ENCODE measurements at regions of chr1 and their contacts with region 1.

Region 1: GRCh38 chr1:161225534-161226319 is at the start of gene TOMM40L:
- DNase-seq: peak; percentile 77 to 97
- ATAC-seq: peak; percentile 90 to 95 (median 94)
- H3K4me3 ChIP-seq: peak within 1 kb of the TSS; percentile 67
- H3K4me3 Mint-ChIP-seq: peak within 1 kb of the TSS; percentile 100
- H3K27ac ChIP-seq: peak within 1 kb of the TSS; percentile 72
- H3K27ac Mint-ChIP-seq: peak within 1 kb of the TSS; percentile 92 to 95
- H3K4me1 ChIP-seq: peaks cover 32% of the 10 kb centered on the region
- H3K4me1 Mint-ChIP-seq: peaks cover 44 to 54% of the 10 kb centered on the region in 2 donors
- H3K27me3 ChIP-seq: no peaks in the 10 kb centered on the region
- H3K27me3 Mint-ChIP-seq: no peaks in the 10 kb centered on the region
- CTCF ChIP-seq: no peak
- total RNA-seq, gene TOMM40L: 16.6 to 23.6 (median 22.8) TPM

Region 2: DNA sequence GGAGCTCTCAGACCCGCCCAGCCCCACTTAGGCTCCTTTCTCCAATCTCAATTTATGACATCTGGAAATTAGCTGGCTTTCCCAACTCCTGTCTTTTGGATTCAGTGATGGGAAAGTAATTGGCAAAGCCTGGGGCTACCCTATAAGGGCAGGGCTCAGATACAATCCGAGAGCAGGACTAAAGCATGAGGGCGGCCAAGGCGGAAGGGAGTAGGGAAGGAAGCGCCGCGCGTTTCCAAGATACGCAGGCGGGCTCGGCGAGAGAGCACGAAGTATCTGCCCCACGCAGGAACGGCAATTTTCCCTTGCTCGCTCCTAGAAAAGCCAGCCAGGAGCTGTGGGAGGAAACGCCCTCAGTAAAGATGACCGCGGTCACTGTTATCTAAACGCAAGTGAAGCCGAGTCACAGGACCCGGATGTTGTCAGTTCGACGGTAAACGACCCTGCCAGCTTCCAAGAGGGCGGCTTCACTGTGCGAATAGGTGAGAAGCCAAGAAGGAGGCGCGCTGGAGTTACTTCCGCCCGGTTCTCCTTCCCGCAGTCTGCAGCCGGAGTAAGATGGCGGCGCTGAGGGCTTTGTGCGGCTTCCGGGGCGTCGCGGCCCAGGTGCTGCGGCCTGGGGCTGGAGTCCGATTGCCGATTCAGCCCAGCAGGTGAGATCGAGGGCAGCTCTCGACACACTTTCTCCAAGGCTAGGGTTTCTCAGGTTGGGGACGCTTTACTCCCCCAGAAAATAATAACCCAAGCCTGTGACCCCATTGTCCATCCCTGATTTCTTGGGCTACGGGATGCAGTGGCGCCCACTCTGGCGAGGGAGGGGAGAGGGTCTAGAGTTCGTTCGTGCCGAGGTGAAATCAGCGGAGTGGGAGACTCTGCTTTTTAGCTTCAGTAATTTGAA is 23.6 kb before region 1 on chr1 and contains the start of gene NDUFS2:
- intact Hi-C with region 1: loop called (anchors 1 kb)
- DNase-seq: peak; percentile 89 to 99
- ATAC-seq: peak; percentile 97 to 99 (median 99)
- H3K4me3 ChIP-seq: peak within 1 kb of the TSS; percentile 76
- H3K4me3 Mint-ChIP-seq: peak within 1 kb of the TSS; percentile 94
- H3K27ac ChIP-seq: peak within 1 kb of the TSS; percentile 90
- H3K27ac Mint-ChIP-seq: peak within 1 kb of the TSS; percentile 95 to 96
- H3K4me1 ChIP-seq: peaks cover 37% of the 10 kb centered on the region
- H3K4me1 Mint-ChIP-seq: peaks cover 29 to 57% of the 10 kb centered on the region in 2 donors
- H3K27me3 ChIP-seq: no peaks in the 10 kb centered on the region
- H3K27me3 Mint-ChIP-seq: no peaks in the 10 kb centered on the region
- CTCF ChIP-seq: no peak
- total RNA-seq, gene NDUFS2: 74.7 to 88.8 (median 84.7) TPM

Region 3: GRCh38 chr1:161290779-161291178 is 65.1 kb after region 1 on chr1:
- intact Hi-C with region 1: loop called (anchors 1 kb)
- DNase-seq: no peak
- ATAC-seq: no peak
- H3K4me3 ChIP-seq: no peak overlapping the region
- H3K4me3 Mint-ChIP-seq: no peak overlapping the region
- H3K27ac ChIP-seq: no peak overlapping the region
- H3K27ac Mint-ChIP-seq: no peak overlapping the region
- H3K4me1 ChIP-seq: no peaks in the 10 kb centered on the region
- H3K4me1 Mint-ChIP-seq: peaks cover 6% of the 10 kb centered on the region in 2 donors
- H3K27me3 ChIP-seq: no peaks in the 10 kb centered on the region
- H3K27me3 Mint-ChIP-seq: peaks cover 0 to 3% of the 10 kb centered on the region in 2 donors
- CTCF ChIP-seq: no peak

Region 4: DNA sequence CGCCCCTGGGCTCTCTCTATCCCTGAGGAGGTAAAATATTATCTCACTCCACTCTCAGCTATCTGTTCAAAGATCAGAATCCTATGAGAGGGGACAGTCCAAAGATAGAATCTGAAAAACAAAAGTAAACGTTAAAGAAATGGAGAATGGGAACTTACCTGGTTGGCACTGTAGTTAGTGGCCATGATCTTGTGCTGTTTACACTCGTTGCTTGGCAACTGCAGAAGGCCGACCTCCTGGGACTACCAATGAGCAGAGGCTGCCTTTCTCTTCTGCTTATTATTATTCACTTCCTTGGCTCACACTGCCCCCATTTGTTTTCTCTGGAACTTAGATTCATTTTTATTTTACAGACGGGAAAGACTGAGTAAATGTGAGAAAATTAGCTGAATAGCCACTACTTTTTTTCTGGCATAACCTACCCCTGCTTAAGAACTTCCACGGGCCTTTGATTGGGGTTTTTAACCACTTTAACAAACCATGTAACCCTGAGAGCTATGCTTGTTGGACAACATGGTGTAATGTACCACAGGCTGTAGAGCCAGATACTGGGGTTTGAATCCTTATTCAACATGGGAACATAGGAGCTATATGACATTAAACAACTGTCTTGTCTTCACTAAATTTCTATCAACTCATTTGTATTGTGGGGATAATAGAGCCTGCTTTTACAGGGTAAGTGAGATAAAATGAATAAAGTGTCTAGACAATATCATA is 142.1 kb after region 1 on chr1 and contains the start of gene CFAP126:
- intact Hi-C with region 1: loop called (anchors 5 kb)
- DNase-seq: peak in 1 of 2 donors; percentile 82
- ATAC-seq: peak; percentile 89 to 100 (median 99)
- H3K4me3 ChIP-seq: no peak within 1 kb of the TSS
- H3K4me3 Mint-ChIP-seq: no peak within 1 kb of the TSS
- H3K27ac ChIP-seq: peak within 1 kb of the TSS; percentile 32
- H3K27ac Mint-ChIP-seq: peak within 1 kb of the TSS; percentile 67 to 82
- H3K4me1 ChIP-seq: no peaks in the 10 kb centered on the region
- H3K4me1 Mint-ChIP-seq: peaks cover 8% of the 10 kb centered on the region in 2 donors
- H3K27me3 ChIP-seq: no peaks in the 10 kb centered on the region
- H3K27me3 Mint-ChIP-seq: no peaks in the 10 kb centered on the region
- CTCF ChIP-seq: no peak
- total RNA-seq, gene CFAP126: not detected